GM10248 (cell line): ENCODE measurements at regions of chr9 and their contacts with region 1.

Region 1: GRCh38 chr9:86222667-86223066 is 36.8 kb downstream of the C9orf153 start:
- DNase-seq: no peak
- CTCF ChIP-seq: no peak

Region 2: GRCh38 chr9:86238861-86239770 is 16.4 kb after region 1 on chr9:
- CTCF ChIA-PET with region 1: interaction called, 10 read pairs
- POLR2A ChIA-PET with region 1: no interaction called
- DNase-seq: no peak
- CTCF ChIP-seq: no peak

Region 3: DNA sequence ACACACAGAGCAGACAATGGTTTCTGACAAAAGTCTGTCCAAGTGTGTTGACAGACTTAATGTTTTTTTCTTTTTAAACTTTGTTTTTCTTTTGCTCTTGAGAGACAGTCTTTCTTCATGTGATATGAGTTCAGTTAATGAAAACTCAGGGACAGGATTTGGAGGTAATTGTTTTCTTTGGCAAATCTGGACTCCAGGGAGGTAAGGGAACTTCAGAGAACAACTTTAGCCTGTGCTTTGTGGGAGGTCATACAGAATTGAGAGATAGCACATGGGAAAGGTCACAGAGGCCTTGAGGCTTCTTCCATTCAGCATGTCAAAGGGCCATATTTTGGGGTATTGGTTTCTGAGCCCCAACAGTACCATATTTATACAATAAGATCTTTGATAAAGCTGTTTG is 27.5 kb after region 1 on chr9:
- CTCF ChIA-PET with region 1: no interaction called
- POLR2A ChIA-PET with region 1: no interaction called
- DNase-seq: no peak
- CTCF ChIP-seq: no peak

Region 4: DNA sequence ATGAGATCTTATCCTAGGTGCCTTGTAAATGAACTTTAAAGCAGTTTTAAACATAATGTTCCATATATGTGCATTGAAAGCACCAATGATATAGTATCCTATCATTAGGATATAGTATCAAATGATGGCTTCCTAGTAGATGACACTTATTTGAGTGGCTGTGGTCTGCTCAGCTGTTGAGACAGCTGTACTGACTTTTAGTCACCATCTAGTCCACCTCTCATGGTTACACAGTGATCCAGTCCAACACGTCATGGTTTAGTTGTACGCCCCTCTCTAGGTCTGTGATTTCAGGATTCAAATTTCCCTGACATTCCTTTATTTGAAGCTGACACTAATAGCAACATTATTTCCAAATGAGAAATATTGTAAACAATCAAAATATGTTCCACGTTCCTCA is 258.8 kb after region 1 on chr9:
- CTCF ChIA-PET with region 1: no interaction called
- POLR2A ChIA-PET with region 1: no interaction called
- DNase-seq: no peak
- CTCF ChIP-seq: no peak